MCF 10A (cell line): ENCODE measurements at regions of chr1 and their contacts with region 1.

Region 1: DNA sequence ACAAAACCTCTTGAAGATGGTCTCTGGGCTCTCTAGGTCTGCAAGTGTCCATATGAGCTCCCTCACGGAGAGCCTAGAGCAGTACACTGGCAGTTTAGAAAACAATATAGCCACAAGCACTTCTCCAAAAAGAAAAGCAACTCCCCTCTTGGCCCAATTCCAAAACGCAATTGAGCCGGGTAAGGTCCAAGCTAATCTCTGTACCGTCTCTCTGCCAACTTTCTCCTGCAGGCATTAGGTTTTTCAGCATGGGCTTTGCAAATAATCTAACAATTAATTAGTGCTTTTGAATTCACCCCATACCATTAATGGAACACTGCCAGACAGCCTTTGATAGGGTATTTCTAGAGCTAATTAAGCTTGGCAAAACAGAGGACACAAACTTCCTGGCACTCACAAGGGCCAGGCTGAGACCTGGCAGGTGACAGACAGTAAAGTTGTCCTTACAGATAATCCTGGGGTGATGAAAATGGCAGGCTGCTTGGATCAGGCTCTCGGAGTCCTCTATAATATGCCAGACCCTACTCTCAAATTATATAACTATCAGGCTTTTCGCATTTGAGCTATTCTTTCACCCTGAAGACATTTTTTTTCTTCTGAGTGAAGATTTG is 39.8 kb downstream of the TGFBR3 start:
- DNase-seq: peak; percentile 91
- H3K4me3 Mint-ChIP-seq: peak overlapping the region; percentile 25
- H3K27ac Mint-ChIP-seq: peak overlapping the region; percentile 88
- H3K4me1 Mint-ChIP-seq: peaks cover 40% of the 10 kb centered on the region
- H3K27me3 Mint-ChIP-seq: no peaks in the 10 kb centered on the region
- CTCF ChIP-seq: no peak

Region 2: GRCh38 chr1:90957497-90957896 is 888.6 kb before region 1 on chr1:
- CTCF ChIA-PET with region 1: no interaction called
- POLR2A ChIA-PET with region 1: no interaction called
- intact Hi-C with region 1: no loop called
- DNase-seq: no peak
- H3K4me3 Mint-ChIP-seq: no peak overlapping the region
- H3K27ac Mint-ChIP-seq: no peak overlapping the region
- H3K4me1 Mint-ChIP-seq: peaks cover 36% of the 10 kb centered on the region
- H3K27me3 Mint-ChIP-seq: no peaks in the 10 kb centered on the region
- CTCF ChIP-seq: no peak

Region 3: DNA sequence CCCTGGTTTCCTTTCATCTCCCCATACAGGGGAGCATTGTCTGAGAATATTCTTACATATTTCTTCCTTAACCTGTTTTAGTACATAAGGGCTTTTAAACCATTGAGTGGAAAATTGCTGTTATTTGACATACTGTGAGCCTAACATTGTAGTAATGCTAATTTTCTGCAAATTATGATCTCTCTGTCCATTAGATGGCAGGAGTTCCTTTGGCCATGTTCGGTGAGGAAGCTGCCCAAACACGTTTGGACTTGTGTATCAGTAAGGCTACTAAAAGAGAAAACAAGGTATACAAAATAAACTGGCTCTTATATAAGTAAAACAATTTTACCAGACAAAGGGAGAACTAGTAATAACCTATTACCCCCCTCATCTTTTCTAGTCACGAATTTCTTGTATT is 316.3 kb before region 1 on chr1:
- CTCF ChIA-PET with region 1: interaction called, 5 read pairs
- POLR2A ChIA-PET with region 1: interaction called, 14 read pairs
- intact Hi-C with region 1: loop called (anchors 1 kb)
- DNase-seq: peak; percentile 67
- H3K4me3 Mint-ChIP-seq: no peak overlapping the region
- H3K27ac Mint-ChIP-seq: peak overlapping the region; percentile 70
- H3K4me1 Mint-ChIP-seq: peaks cover 14% of the 10 kb centered on the region
- H3K27me3 Mint-ChIP-seq: no peaks in the 10 kb centered on the region
- CTCF ChIP-seq: peak; percentile 60

Region 4: DNA sequence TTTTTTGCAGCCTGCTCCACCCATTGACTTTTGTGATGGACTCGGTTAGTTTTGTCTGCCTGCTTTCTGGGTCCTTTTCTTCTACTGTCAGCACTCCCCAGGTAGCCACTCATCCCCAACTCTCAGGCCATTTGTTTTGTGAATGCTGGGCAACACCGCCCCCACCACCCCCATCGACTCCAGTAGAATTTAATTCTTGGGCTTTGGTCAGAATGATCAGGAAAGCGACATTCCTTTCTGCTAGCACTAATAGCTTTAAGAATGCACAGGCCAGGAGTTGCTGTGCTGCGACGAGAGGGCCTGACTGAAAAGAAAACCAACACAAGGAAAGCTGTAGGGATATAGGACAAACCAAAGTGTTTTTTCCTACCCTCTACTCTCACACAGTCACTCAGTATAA is 201.1 kb before region 1 on chr1:
- CTCF ChIA-PET with region 1: no interaction called
- POLR2A ChIA-PET with region 1: no interaction called
- intact Hi-C with region 1: no loop called
- DNase-seq: no peak
- H3K4me3 Mint-ChIP-seq: no peak overlapping the region
- H3K27ac Mint-ChIP-seq: no peak overlapping the region
- H3K4me1 Mint-ChIP-seq: no peaks in the 10 kb centered on the region
- H3K27me3 Mint-ChIP-seq: no peaks in the 10 kb centered on the region
- CTCF ChIP-seq: no peak

Region 5: GRCh38 chr1:91732291-91733107 is 113.6 kb before region 1 on chr1:
- CTCF ChIA-PET with region 1: interaction called, 4 read pairs
- POLR2A ChIA-PET with region 1: interaction called, 22 read pairs
- intact Hi-C with region 1: loop called (anchors 2 kb)
- DNase-seq: peak; percentile 85
- H3K4me3 Mint-ChIP-seq: peak overlapping the region; percentile 47
- H3K27ac Mint-ChIP-seq: peak overlapping the region; percentile 79
- H3K4me1 Mint-ChIP-seq: peaks cover 55% of the 10 kb centered on the region
- H3K27me3 Mint-ChIP-seq: no peaks in the 10 kb centered on the region
- CTCF ChIP-seq: no peak

Region 6: DNA sequence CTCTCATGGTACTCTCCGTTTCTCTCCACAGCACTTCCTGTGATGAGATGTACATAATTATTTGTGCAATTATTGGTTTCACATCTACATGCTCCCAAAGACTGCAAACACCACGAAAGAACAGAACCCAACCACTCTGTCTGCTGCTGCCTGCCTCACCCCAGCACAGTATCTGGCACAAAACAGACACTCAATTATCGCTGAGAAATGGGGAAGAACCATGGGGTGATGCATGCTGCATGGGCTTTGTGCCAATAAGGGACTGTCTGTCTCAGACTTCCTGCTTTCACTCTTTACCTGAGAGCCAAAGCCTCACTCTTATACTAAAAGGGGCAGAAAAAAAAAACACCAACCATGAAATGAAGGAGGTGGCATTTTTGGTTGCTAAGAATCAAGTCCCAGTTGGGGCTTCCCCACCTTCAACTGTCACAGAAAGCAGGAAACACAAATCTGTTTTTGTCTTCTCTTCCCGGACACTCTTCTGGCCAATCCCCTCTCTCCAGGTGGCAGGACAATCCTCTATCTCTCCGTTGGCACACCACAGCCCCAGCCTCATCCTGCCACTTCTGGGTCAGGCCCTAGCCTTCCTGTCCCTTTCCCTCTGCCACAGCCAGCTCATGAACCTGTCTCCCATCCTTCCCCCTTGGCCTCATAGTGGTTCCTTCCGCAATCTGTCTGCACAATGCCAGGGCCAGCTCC is 42.1 kb before region 1 on chr1:
- CTCF ChIA-PET with region 1: interaction called, 4 read pairs
- POLR2A ChIA-PET with region 1: interaction called, 32 read pairs
- intact Hi-C with region 1: loop called (anchors 2 kb)
- DNase-seq: peak; percentile 78
- H3K4me3 Mint-ChIP-seq: peak overlapping the region; percentile 54
- H3K27ac Mint-ChIP-seq: peak overlapping the region; percentile 88
- H3K4me1 Mint-ChIP-seq: peaks cover 73% of the 10 kb centered on the region
- H3K27me3 Mint-ChIP-seq: no peaks in the 10 kb centered on the region
- CTCF ChIP-seq: no peak

Region 7: GRCh38 chr1:91830242-91831131 is 15.6 kb before region 1 on chr1:
- CTCF ChIA-PET with region 1: interaction called, 6 read pairs
- POLR2A ChIA-PET with region 1: interaction called, 30 read pairs
- intact Hi-C with region 1: no loop called
- DNase-seq: peak; percentile 62
- H3K4me3 Mint-ChIP-seq: no peak overlapping the region
- H3K27ac Mint-ChIP-seq: peak overlapping the region; percentile 87
- H3K4me1 Mint-ChIP-seq: peaks cover 30% of the 10 kb centered on the region
- H3K27me3 Mint-ChIP-seq: no peaks in the 10 kb centered on the region
- CTCF ChIP-seq: peak; percentile 6

Region 8: DNA sequence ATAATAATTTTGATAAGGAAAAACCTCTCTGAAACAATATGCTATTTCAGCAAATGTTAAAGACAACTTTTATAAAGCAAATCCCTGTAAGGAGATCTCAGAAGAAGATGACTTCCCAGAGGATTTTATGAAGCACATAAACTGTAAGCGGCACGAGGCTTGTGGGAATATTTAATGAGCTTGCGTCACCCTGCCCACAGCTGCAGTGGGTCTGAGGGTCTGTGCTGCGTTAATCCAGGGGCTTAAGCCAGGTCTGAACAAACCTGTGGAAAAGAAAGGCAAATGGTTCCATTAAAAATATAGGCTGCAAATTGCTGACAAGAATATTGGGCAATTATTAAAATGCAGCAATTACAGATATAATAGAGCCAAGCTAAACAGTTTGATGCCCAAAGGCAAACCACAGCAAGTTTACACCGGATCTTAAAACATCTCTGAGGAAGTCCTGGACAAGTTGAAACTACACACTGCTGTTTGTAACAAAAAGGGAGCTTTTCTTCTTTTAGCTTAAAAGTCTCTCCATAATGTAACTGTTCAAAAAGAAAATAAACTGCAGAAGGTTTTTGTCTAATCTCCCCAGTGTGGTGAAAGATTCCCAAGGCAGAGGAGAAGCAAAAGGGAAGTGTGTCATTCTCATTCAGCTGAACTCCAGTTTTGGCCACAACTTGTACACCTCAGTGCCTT is 18.0 kb after region 1 on chr1:
- CTCF ChIA-PET with region 1: interaction called, 6 read pairs
- POLR2A ChIA-PET with region 1: interaction called, 62 read pairs
- intact Hi-C with region 1: loop called (anchors 2 kb)
- DNase-seq: peak; percentile 90
- H3K4me3 Mint-ChIP-seq: peak overlapping the region; percentile 48
- H3K27ac Mint-ChIP-seq: peak overlapping the region; percentile 32
- H3K4me1 Mint-ChIP-seq: peaks cover 13% of the 10 kb centered on the region
- H3K27me3 Mint-ChIP-seq: no peaks in the 10 kb centered on the region
- CTCF ChIP-seq: no peak